ENCODE measurements at regions of chr1 and their contacts with region 1.

Region 1: DNA sequence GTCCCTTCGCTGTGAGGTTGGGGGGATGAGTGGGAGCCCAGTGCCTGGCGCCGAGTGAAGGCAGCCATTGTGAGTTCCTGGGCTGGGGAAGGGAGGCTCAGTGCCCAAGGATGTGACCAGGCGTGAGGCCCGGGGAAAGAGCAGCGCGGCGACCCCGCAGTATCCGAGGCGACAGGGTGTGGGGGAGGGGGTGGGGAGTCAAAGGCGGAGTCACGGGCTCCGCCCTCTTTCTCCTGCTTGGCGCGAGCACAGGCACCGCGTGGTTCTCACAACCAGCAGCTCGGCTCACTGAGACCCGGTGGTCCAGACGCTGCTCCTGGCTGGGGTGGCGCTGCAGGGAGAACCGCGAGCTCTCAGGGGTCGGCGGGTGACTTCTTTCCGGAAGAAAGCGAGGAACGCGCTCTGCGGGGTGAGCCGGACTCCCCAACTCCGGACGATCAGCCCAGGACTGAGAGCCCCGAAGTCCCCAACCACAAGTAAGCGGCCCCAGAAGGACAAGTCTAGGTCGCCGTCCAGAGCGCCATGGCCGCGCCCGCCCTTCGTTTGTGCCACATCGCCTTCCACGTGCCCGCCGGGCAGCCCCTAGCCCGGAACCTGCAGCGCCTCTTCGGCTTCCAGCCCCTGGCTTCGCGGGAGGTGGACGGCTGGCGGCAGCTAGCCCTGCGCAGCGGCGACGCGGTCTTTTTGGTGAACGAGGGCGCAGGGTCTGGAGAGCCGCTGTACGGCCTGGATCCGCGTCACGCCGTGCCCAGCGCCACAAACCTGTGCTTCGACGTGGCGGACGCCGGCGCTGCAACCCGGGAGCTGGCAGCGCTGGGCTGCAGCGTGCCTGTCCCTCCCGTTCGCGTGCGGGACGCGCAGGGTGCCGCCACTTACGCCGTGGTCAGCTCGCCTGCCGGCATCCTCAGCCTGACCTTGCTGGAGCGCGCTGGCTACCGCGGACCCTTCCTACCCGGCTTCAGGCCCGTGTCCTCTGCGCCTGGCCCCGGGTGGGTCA is at the start of gene HPDL:
- DNase-seq: peak; percentile 77
- ATAC-seq: peak; percentile 83
- H3K4me3 Mint-ChIP-seq: peak within 1 kb of the TSS; percentile 82
- H3K27ac Mint-ChIP-seq: peak within 1 kb of the TSS; percentile 81
- H3K4me1 Mint-ChIP-seq: peaks cover 16% of the 10 kb centered on the region
- H3K27me3 Mint-ChIP-seq: peaks cover 4% of the 10 kb centered on the region
- total RNA-seq, gene HPDL: 8.4 to 10.3 TPM

Region 2: GRCh38 chr1:45303582-45304310 is 23.2 kb before region 1 on chr1:
- POLR2A ChIA-PET with region 1: interaction called, 17 read pairs
- DNase-seq: peak; percentile 96
- ATAC-seq: peak; percentile 86
- H3K4me3 Mint-ChIP-seq: peak overlapping the region; percentile 90
- H3K27ac Mint-ChIP-seq: peak overlapping the region; percentile 96
- H3K4me1 Mint-ChIP-seq: peaks cover 28% of the 10 kb centered on the region
- H3K27me3 Mint-ChIP-seq: no peaks in the 10 kb centered on the region

Region 3: DNA sequence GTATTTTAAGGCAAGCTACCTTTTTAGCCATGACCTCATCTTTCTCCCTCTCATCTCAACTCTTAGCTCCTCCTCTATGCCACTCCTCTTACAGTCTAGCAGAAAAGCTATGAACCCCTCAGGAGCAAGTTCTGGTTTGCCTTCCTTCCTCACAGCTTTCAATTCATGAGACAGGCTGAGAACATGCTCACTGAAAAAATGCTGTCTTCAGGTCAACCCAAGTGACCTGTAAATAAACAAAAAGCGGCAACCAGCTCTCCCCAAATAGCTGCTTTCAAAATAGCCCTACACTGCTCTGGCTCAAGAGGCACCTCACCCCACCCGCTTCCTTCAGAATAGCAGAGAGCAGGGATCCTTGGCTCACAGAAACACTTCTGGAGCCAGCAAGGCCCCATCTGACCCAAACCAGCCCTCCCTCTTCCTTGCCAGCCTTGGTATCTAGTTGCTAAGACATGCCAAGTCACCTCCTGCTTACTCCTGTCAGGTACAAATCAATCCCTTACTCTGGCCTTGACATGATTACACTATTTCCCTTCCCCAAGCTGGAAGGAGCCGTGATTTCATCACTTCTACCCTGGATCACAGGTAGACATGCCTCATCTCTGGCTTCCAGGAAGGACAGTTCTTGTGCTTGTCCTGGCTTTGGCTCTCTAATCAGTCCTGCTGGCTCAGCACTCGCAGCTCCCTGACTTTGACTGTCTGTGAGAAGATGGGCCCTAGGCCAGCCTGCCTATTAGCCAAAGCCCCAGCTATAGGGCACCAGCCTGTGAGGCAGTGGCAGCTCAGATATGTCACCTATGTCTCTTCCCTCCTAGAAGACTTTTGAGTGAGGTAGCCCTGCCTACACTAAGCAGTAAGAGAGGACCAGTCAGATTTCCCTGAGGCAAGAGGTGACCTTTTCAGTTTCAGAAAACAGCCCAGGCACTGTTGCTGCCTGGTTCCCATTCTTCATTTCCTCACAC is 22.1 kb after region 1 on chr1:
- POLR2A ChIA-PET with region 1: no interaction called
- DNase-seq: no peak
- ATAC-seq: no peak
- H3K4me3 Mint-ChIP-seq: no peak overlapping the region
- H3K27ac Mint-ChIP-seq: no peak overlapping the region
- H3K4me1 Mint-ChIP-seq: peaks cover 21% of the 10 kb centered on the region
- H3K27me3 Mint-ChIP-seq: no peaks in the 10 kb centered on the region

Region 4: GRCh38 chr1:45490626-45491486 is 163.9 kb after region 1 on chr1 and contains the start of gene TESK2:
- POLR2A ChIA-PET with region 1: interaction called, 10 read pairs
- DNase-seq: peak; percentile 96
- ATAC-seq: peak; percentile 94
- H3K4me3 Mint-ChIP-seq: no peak within 1 kb of the TSS
- H3K27ac Mint-ChIP-seq: no peak within 1 kb of the TSS
- H3K4me1 Mint-ChIP-seq: peaks cover 9% of the 10 kb centered on the region
- H3K27me3 Mint-ChIP-seq: no peaks in the 10 kb centered on the region
- total RNA-seq, gene TESK2: 5.8 to 6.5 TPM

Measured in activated naive CD8-positive, alpha-beta T cell treated with anti-CD3 and anti-CD28 coated beads, Interleukin-2, amount 10 ng/mL, durations not matched to agents 7 days and 5 days (primary cell).